ENCODE measurements at regions of chr11 and their contacts with region 1.

Region 1: DNA sequence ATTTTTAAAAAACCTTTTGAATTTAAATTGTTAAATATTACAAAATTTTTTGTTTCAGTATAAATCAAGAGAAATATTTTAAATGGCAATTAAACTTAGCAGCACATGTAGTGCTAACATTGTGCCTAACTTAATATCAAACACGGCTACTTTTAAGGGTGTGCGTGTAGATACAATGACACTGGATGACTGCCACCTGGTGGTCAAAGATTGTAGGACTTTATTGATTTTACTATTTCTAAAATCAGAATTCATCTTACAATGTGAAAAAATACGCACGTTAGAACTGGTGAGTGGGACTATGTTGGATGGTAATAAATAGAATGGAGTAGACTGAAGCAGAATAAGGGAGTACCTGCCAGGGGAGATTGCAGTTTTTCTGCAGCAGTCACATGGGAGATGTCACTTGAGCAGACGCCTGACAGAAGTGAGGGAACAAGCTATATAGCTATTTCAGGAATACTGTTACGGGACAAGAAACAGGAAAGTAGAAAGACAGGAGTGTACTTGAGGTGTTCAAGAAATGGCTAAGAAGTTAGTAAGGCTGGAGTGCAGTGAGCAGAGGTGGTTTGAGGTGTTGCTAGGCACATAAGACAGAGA is 52.9 kb downstream of the UVRAG start:
- DNase-seq: no peak
- ATAC-seq: peak; percentile 61 to 88 (median 68)
- H3K4me3 ChIP-seq: no peak overlapping the region
- H3K27ac ChIP-seq: no peak overlapping the region
- H3K4me1 ChIP-seq: peaks cover 4% of the 10 kb centered on the region
- H3K27me3 ChIP-seq: no peaks in the 10 kb centered on the region
- CTCF ChIP-seq: peak; percentile 90

Region 2: GRCh38 chr11:75802913-75803820 is 64.7 kb before region 1 on chr11:
- intact Hi-C with region 1: loop called (anchors 1 to 2 kb)
- DNase-seq: peak; percentile 66 to 72
- ATAC-seq: peak; percentile 88 to 96 (median 91)
- H3K4me3 ChIP-seq: no peak overlapping the region
- H3K27ac ChIP-seq: no peak overlapping the region
- H3K4me1 ChIP-seq: peaks cover 4% of the 10 kb centered on the region
- H3K27me3 ChIP-seq: no peaks in the 10 kb centered on the region
- CTCF ChIP-seq: peak; percentile 95

Region 3: DNA sequence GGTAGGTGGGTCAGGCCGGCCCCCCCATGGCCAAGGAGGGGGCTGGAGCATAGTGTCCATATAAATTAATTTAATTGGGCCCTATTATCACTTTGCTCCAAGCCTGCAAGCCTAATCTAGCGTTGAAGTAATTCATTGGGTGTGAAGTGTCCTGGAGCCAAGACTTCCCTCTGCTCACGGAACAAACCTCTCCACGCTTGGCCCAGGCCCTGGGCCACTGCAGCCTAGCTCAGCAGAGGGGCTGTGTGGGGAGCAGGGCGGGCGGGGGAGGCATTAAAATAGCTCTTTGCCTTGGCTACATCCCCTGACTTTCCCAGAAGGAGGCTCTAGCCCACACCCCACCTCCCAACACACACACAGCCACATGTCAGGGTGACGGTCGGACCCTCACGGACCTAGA is 439.5 kb after region 1 on chr11:
- intact Hi-C with region 1: no loop called
- DNase-seq: no peak
- ATAC-seq: no peak
- H3K4me3 ChIP-seq: no peak overlapping the region
- H3K27ac ChIP-seq: no peak overlapping the region
- H3K4me1 ChIP-seq: no peaks in the 10 kb centered on the region
- H3K27me3 ChIP-seq: no peaks in the 10 kb centered on the region
- CTCF ChIP-seq: no peak